CD8-positive, alpha-beta T cell (primary cell): ENCODE measurements at regions of chr1 and their contacts with region 1.

Region 1: DNA sequence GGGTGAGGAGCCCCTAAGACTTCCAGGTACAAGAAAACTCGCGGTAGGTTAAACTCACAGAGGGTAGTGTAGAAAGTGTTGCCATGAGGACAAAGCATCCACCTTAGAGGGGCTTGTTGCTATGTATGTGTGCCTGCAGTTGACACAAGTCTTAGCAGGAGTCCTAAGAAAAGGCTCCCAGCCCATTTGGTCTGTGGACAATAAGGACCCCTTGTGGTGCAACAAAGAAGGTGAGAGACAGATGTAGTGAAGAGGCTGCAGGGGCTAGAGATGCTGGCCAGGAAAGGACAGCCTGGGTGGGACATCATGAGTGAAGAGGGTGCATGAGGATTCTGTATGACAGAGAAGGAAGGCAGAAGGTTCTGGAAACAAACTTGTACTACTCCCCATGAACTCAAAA is 36.3 kb upstream of the IL10 start:
- DNase-seq: peak; percentile 16 to 87 (median 54)
- ATAC-seq: peak; percentile 91
- H3K4me3 ChIP-seq: no peak overlapping the region
- H3K4me3 Mint-ChIP-seq: no peak overlapping the region
- H3K27ac ChIP-seq: no peak overlapping the region
- H3K27ac Mint-ChIP-seq: peak overlapping the region; percentile 10
- H3K4me1 ChIP-seq: peaks cover 25% of the 10 kb centered on the region
- H3K4me1 Mint-ChIP-seq: peaks cover 42% of the 10 kb centered on the region
- H3K27me3 ChIP-seq: no peaks in the 10 kb centered on the region
- H3K27me3 Mint-ChIP-seq: no peaks in the 10 kb centered on the region
- CTCF ChIP-seq: peak; percentile 50

Region 2: DNA sequence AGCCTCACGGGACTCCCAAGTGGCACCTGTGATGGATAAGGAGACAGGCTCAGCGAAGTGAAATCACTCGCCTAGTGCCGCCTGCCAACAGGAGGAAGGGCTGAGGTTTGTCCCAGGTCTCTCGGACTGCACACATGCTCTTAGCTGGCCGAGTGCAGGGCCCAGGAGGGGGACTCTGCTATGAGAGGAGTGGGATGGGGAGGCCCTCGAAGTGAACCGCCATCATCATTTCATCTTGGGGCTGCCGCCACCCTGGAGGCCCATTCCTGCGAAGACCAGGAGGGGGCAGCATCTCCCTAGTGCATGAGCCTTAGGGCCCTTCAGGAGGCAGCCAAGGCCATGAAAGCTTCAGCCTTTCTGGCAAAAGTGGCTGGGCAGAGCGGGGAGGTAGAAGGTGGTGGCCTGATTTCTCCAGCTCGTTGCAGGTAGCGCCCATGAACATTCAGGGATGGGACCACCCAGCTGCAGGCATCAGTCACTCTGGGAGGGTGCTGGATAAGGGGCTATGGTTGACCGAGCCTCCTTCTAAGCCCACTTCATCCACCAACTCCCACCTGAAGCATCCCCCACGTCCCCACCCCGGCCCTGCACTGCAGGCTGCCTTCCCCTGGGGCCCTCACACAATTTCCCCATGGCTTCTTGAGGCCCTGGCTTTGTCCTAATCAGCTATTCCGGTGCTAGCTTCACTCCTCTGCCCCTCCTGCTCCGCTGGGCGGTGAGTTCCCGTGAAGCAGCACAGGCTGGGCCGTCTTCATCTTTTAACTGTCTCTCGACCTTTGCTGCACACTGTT is 318.4 kb before region 1 on chr1:
- CTCF ChIA-PET with region 1: no interaction called
- POLR2A ChIA-PET with region 1: no interaction called
- intact Hi-C with region 1: no loop called
- DNase-seq: peak; percentile 47 to 76 (median 71)
- ATAC-seq: peak; percentile 91
- H3K4me3 ChIP-seq: no peak overlapping the region
- H3K4me3 Mint-ChIP-seq: no peak overlapping the region
- H3K27ac ChIP-seq: no peak overlapping the region
- H3K27ac Mint-ChIP-seq: peak overlapping the region; percentile 18
- H3K4me1 ChIP-seq: no peaks in the 10 kb centered on the region
- H3K4me1 Mint-ChIP-seq: no peaks in the 10 kb centered on the region
- H3K27me3 ChIP-seq: no peaks in the 10 kb centered on the region
- H3K27me3 Mint-ChIP-seq: no peaks in the 10 kb centered on the region
- CTCF ChIP-seq: peak; percentile 67

Region 3: DNA sequence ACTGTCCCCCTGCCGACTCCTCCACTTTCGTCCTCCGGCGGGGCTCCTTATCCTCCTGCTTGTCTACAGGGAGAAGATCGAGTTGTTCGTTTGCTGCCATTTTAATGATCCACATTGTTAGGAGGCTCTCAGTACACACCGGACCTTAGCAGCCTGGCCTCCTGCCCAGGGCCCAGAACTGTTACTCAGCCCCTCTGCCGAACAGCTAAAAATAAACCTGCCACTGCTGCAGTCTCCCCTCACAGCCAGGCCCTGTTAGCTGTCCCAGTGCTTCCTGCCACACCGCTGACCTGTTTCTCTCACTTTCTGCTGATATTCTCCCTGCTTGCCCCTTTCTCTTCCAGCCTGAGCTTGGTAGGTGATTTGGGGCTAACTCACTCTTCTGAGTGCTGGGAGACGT is 115.6 kb before region 1 on chr1:
- CTCF ChIA-PET with region 1: interaction called, 13 read pairs
- POLR2A ChIA-PET with region 1: no interaction called
- intact Hi-C with region 1: no loop called
- DNase-seq: no peak
- ATAC-seq: peak; percentile 23
- H3K4me3 ChIP-seq: no peak overlapping the region
- H3K4me3 Mint-ChIP-seq: no peak overlapping the region
- H3K27ac ChIP-seq: no peak overlapping the region
- H3K27ac Mint-ChIP-seq: no peak overlapping the region
- H3K4me1 ChIP-seq: peaks cover 15% of the 10 kb centered on the region
- H3K4me1 Mint-ChIP-seq: peaks cover 92% of the 10 kb centered on the region
- H3K27me3 ChIP-seq: no peaks in the 10 kb centered on the region
- H3K27me3 Mint-ChIP-seq: no peaks in the 10 kb centered on the region
- CTCF ChIP-seq: no peak

Region 4: GRCh38 chr1:206761159-206761768 is 47.4 kb before region 1 on chr1:
- CTCF ChIA-PET with region 1: interaction called, 18 read pairs
- POLR2A ChIA-PET with region 1: interaction called, 18 read pairs
- intact Hi-C with region 1: loop called (anchors 1 kb)
- DNase-seq: no peak
- ATAC-seq: no peak
- H3K4me3 ChIP-seq: no peak overlapping the region
- H3K4me3 Mint-ChIP-seq: no peak overlapping the region
- H3K27ac ChIP-seq: no peak overlapping the region
- H3K27ac Mint-ChIP-seq: no peak overlapping the region
- H3K4me1 ChIP-seq: peaks cover 59% of the 10 kb centered on the region
- H3K4me1 Mint-ChIP-seq: peaks cover 33% of the 10 kb centered on the region
- H3K27me3 ChIP-seq: no peaks in the 10 kb centered on the region
- H3K27me3 Mint-ChIP-seq: no peaks in the 10 kb centered on the region
- CTCF ChIP-seq: no peak

Region 5: DNA sequence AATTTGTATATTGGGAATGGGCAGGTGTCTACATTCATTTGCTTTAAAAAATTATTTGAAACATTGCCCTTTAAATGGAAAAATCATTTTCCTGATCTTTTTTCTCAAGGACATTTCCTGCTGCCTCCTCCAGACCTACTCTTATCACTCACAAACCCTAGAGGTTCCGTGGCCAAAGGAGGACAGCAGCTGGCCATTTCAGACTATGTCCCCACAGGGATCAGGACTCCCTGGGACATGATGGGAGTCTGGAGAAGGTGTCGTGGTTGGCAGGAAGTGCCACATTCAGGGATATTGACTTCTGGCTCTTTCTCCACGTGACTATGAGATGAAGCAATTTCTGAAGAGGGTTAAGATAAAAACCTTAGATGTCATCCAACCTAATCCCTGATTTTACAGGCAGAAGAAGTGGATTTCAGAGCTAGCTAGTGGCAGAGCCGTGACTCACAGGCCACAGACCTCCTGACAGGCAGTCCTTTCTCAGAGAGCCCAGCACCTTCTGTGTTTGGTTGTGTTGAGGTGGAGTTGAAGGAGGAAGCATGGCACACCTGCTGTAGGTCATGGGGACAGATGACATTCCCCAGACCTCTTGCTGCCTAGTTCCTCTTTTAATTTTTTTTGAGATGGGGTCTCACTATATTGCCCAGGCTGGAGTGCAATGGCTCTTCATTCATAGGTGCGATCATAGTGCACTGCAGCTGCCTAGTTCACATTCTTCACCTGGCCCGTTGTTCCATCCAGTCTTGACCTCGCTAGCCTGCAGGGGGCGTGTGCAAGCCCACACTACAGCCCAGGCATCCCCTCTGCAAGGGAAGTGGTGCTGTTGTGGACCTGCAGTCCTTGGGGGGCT is 10.9 kb before region 1 on chr1:
- CTCF ChIA-PET with region 1: interaction called, 10 read pairs
- POLR2A ChIA-PET with region 1: interaction called, 6 read pairs
- intact Hi-C with region 1: no loop called
- DNase-seq: peak in 5 of 9 experiments; percentile 37 to 72 (median 62)
- ATAC-seq: peak; percentile 21
- H3K4me3 ChIP-seq: no peak overlapping the region
- H3K4me3 Mint-ChIP-seq: no peak overlapping the region
- H3K27ac ChIP-seq: no peak overlapping the region
- H3K27ac Mint-ChIP-seq: no peak overlapping the region
- H3K4me1 ChIP-seq: peaks cover 34% of the 10 kb centered on the region
- H3K4me1 Mint-ChIP-seq: peaks cover 57% of the 10 kb centered on the region
- H3K27me3 ChIP-seq: no peaks in the 10 kb centered on the region
- H3K27me3 Mint-ChIP-seq: no peaks in the 10 kb centered on the region
- CTCF ChIP-seq: peak; percentile 28

Region 6: DNA sequence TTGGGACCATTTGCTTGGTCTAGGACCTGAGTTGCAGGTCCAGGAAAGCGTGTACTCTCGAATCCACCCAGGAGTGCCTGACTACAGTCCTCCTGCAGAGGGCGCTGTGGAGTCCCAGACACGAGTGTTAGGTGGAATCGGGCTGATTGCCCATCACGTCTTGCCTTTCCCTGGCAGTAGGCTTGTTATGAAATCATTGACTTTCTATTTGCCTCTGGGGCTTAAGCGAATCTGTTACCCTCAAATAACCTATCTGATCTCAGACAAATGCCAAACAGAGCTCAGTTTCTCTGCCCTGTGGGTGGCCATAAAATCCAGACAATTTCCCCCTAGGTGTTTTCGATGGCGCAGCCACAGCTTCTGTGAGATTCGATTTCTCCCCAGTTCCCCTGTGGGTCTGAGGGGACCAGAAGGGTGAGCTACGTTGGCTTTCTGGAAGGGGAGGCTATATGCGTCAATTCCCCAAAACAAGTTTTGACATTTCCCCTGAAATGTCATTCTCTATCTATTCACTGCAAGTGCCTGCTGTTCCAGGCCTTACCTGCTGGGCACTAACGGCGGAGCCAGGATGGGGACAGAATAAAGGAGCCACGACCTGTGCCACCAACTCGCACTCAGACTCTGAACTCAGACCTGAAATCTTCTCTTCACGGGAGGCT is 56.5 kb after region 1 on chr1 and contains the start of gene IL20:
- CTCF ChIA-PET with region 1: interaction called, 13 read pairs
- POLR2A ChIA-PET with region 1: no interaction called
- intact Hi-C with region 1: no loop called
- DNase-seq: peak; percentile 72 to 93 (median 86)
- ATAC-seq: peak; percentile 97
- H3K4me3 ChIP-seq: no peak within 1 kb of the TSS
- H3K4me3 Mint-ChIP-seq: no peak within 1 kb of the TSS
- H3K27ac ChIP-seq: no peak within 1 kb of the TSS
- H3K27ac Mint-ChIP-seq: no peak within 1 kb of the TSS
- H3K4me1 ChIP-seq: peaks cover 7% of the 10 kb centered on the region
- H3K4me1 Mint-ChIP-seq: peaks cover 7% of the 10 kb centered on the region
- H3K27me3 ChIP-seq: no peaks in the 10 kb centered on the region
- H3K27me3 Mint-ChIP-seq: no peaks in the 10 kb centered on the region
- CTCF ChIP-seq: peak; percentile 91
- total RNA-seq, gene IL20: not detected

Region 7: GRCh38 chr1:206935491-206936067 is 127.0 kb after region 1 on chr1:
- CTCF ChIA-PET with region 1: interaction called, 82 read pairs
- POLR2A ChIA-PET with region 1: no interaction called
- intact Hi-C with region 1: loop called in 1 of 2 experiments (anchors 1 kb)
- DNase-seq: peak in 6 of 9 experiments; percentile 41 to 65 (median 52)
- ATAC-seq: peak; percentile 45
- H3K4me3 ChIP-seq: no peak overlapping the region
- H3K4me3 Mint-ChIP-seq: no peak overlapping the region
- H3K27ac ChIP-seq: no peak overlapping the region
- H3K27ac Mint-ChIP-seq: no peak overlapping the region
- H3K4me1 ChIP-seq: peaks cover 20% of the 10 kb centered on the region
- H3K4me1 Mint-ChIP-seq: peaks cover 26% of the 10 kb centered on the region
- H3K27me3 ChIP-seq: no peaks in the 10 kb centered on the region
- H3K27me3 Mint-ChIP-seq: no peaks in the 10 kb centered on the region
- CTCF ChIP-seq: peak; percentile 48

Region 8: DNA sequence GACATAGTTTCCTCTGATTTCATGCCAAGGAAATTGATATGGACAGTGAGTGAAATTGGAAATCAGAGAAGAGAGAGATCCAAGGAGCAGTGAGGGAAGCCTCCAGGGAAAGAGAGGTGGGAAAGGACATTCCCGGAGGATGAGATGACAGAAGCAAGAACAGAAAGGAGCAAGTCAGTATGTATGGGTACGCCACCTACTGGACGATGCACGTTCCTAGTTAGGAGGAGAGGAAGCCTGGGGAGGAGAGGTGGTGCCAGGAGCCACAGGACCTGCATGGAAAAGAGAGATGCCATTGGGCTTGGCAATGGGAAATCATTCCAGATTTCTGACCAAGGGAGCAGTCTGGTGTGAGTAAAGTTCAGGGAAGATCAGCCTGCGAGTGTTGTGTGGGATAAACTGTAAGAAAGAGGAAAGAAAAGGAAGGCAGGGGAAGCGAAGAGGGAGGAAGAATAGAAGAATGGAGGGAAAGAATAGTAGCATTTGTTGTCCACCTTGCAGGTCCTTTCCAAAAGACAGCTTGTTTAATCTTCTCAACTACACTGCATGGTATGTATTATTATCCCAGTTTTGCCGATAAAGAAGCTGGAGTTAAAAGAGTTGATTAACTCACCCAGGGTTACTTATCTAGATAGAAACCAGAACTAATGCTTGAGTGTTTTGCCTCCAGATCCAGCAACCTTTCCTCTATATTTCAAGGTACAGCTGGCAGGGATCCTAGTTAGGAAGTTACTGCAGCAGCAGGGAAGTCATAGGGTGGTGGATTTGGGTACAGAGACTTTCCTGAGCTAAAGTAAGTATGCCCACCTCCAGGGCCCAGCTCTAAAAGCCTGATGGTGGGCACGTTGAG is 196.6 kb after region 1 on chr1:
- CTCF ChIA-PET with region 1: no interaction called
- POLR2A ChIA-PET with region 1: no interaction called
- intact Hi-C with region 1: no loop called
- DNase-seq: peak in 7 of 9 experiments; percentile 9 to 58 (median 41)
- ATAC-seq: peak; percentile 51
- H3K4me3 ChIP-seq: no peak overlapping the region
- H3K4me3 Mint-ChIP-seq: no peak overlapping the region
- H3K27ac ChIP-seq: no peak overlapping the region
- H3K27ac Mint-ChIP-seq: no peak overlapping the region
- H3K4me1 ChIP-seq: no peaks in the 10 kb centered on the region
- H3K4me1 Mint-ChIP-seq: peaks cover 2% of the 10 kb centered on the region
- H3K27me3 ChIP-seq: no peaks in the 10 kb centered on the region
- H3K27me3 Mint-ChIP-seq: peaks cover 3% of the 10 kb centered on the region
- CTCF ChIP-seq: peak; percentile 63

Region 9: GRCh38 chr1:207058878-207059867 is 250.6 kb after region 1 on chr1:
- CTCF ChIA-PET with region 1: no interaction called
- POLR2A ChIA-PET with region 1: no interaction called
- intact Hi-C with region 1: no loop called
- DNase-seq: no peak
- ATAC-seq: no peak
- H3K4me3 ChIP-seq: no peak overlapping the region
- H3K4me3 Mint-ChIP-seq: no peak overlapping the region
- H3K27ac ChIP-seq: no peak overlapping the region
- H3K27ac Mint-ChIP-seq: no peak overlapping the region
- H3K4me1 ChIP-seq: no peaks in the 10 kb centered on the region
- H3K4me1 Mint-ChIP-seq: peaks cover 2% of the 10 kb centered on the region
- H3K27me3 ChIP-seq: no peaks in the 10 kb centered on the region
- H3K27me3 Mint-ChIP-seq: no peaks in the 10 kb centered on the region
- CTCF ChIP-seq: no peak